PC-9 (cell line): ENCODE measurements at regions of chr19 and their contacts with region 1.

Region 1: GRCh38 chr19:19944583-19944880 is 43.8 kb downstream of the ZNF93 start:
- DNase-seq: no peak
- H3K4me3 ChIP-seq: no peak overlapping the region
- H3K27ac ChIP-seq: no peak overlapping the region
- H3K4me1 ChIP-seq: no peaks in the 10 kb centered on the region
- H3K27me3 ChIP-seq: peaks cover 26% of the 10 kb centered on the region; the same call in 1 of the 2 replicates
- CTCF ChIP-seq: no peak

Region 2: GRCh38 chr19:19329126-19329525 is 615.4 kb before region 1 on chr19:
- CTCF ChIA-PET with region 1: no interaction called
- POLR2A ChIA-PET with region 1: interaction called, 32 read pairs
- intact Hi-C with region 1: no loop called
- DNase-seq: no peak
- H3K4me3 ChIP-seq: no peak overlapping the region
- H3K27ac ChIP-seq: no peak overlapping the region
- H3K4me1 ChIP-seq: no peaks in the 10 kb centered on the region
- H3K27me3 ChIP-seq: no peaks in the 10 kb centered on the region
- CTCF ChIP-seq: no peak

Region 3: GRCh38 chr19:19805480-19805879 is 139.1 kb before region 1 on chr19:
- CTCF ChIA-PET with region 1: no interaction called
- POLR2A ChIA-PET with region 1: no interaction called
- intact Hi-C with region 1: no loop called
- DNase-seq: no peak
- H3K4me3 ChIP-seq: no peak overlapping the region
- H3K27ac ChIP-seq: no peak overlapping the region
- H3K4me1 ChIP-seq: no peaks in the 10 kb centered on the region
- H3K27me3 ChIP-seq: no peaks in the 10 kb centered on the region
- CTCF ChIP-seq: no peak

Region 4: DNA sequence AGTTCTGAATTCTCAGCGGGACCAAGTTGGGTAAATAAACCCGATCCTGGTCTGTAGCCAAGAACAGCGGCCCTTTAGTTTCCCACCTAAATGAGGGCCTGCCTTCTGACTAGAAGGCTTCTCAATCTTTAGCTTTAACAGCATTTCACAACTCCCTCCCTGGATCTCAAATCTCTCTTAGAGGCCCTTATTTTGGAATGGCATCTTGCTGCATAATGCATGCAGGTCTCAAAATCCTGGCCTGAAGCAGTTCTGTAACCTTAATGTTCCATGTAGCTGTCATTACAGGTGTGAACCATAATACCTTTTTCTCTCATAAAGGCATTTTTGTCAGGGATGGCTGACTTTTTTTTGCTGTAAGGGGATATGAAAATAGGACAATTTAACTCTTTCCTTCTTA is 162.8 kb after region 1 on chr19:
- CTCF ChIA-PET with region 1: no interaction called
- POLR2A ChIA-PET with region 1: no interaction called
- intact Hi-C with region 1: no loop called
- DNase-seq: no peak
- H3K4me3 ChIP-seq: no peak overlapping the region
- H3K27ac ChIP-seq: no peak overlapping the region
- H3K4me1 ChIP-seq: no peaks in the 10 kb centered on the region
- H3K27me3 ChIP-seq: no peaks in the 10 kb centered on the region
- CTCF ChIP-seq: no peak